Dendritic cell treated with granulocyte-macrophage colony-stimulating factor and Interleukin-4, amounts not matched to agents 40 ng/mL and 50 ng/mL, for 4 days (primary cell): ENCODE measurements at regions of chr6 and their contacts with region 1.

Region 1: GRCh38 chr6:89432875-89433251 is at the start of gene ANKRD6:
- H3K4me3 Mint-ChIP-seq: peak within 1 kb of the TSS; percentile 77
- H3K27ac Mint-ChIP-seq: peak within 1 kb of the TSS; percentile 41
- H3K4me1 Mint-ChIP-seq: peaks cover 11% of the 10 kb centered on the region
- H3K27me3 Mint-ChIP-seq: peaks cover 9% of the 10 kb centered on the region

Region 2: DNA sequence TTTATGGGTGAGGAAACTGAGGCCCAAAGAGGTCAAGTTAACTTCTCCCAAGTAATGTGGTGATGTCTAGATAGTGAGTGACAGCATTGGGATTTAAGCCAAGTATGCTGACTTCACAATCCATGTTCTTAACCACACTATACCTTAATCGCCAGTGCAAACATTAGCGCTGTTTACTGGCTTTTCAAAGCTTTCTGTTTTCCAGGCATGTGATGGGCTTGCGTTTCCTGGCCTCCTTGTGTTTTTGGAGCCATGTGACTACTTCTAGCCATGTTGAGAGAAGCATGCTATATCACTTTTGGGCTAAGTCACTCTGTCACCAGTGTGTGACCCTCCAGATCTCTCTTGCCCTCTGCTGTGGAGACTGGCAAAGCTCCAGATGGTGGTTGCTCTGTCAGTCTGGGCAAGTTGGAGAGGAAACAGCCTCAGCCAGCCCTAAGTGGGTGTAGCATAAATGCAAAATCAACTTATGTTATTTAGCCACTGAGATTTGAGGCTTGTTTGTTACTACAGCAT is 77.0 kb after region 1 on chr6:
- intact Hi-C with region 1: no loop called
- H3K4me3 Mint-ChIP-seq: no peak overlapping the region
- H3K27ac Mint-ChIP-seq: no peak overlapping the region
- H3K4me1 Mint-ChIP-seq: no peaks in the 10 kb centered on the region
- H3K27me3 Mint-ChIP-seq: no peaks in the 10 kb centered on the region

Region 3: GRCh38 chr6:89610149-89610642 is 177.3 kb after region 1 on chr6:
- intact Hi-C with region 1: loop called (anchors 1 kb)
- H3K4me3 Mint-ChIP-seq: no peak overlapping the region
- H3K27ac Mint-ChIP-seq: no peak overlapping the region
- H3K4me1 Mint-ChIP-seq: no peaks in the 10 kb centered on the region
- H3K27me3 Mint-ChIP-seq: no peaks in the 10 kb centered on the region